Activated CD8-positive, alpha-beta T cell treated with anti-CD3 and anti-CD28 coated beads for 36 hours (primary cell): ENCODE measurements at regions of chr19 and their contacts with region 1.

Region 1: DNA sequence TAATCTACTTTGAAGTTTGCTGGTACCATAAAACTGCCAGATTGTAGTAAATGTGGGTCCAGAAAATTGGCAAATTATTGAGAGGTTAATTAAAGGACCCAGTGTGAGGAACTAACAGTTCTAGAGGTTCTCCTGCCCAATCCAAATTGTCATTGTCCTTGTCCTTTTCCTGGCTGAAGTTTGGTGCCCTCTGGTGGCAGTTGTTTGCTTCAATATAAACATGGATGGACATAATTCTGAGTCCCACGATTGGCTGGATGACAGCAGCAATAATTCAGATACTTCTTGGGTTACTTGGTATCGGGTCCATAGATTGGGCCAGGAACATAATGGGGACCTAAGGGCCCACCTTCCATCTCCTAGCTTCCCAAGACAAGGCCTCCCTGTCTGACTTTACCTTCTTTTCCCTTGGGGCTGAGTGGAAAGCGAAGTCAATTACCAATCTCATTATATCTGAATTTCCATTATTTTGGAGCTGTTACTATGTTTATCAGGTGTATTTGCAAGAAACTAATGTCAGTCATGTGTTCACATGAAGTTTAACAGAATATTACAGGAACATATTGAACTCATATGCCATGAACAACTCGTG is 33.8 kb upstream of the GARRE1 start:
- DNase-seq: peak; percentile 82
- ATAC-seq: no peak
- H3K4me3 Mint-ChIP-seq: no peak overlapping the region
- H3K27ac Mint-ChIP-seq: peak overlapping the region; percentile 45
- H3K4me1 Mint-ChIP-seq: peaks cover 49% of the 10 kb centered on the region
- H3K27me3 Mint-ChIP-seq: no peaks in the 10 kb centered on the region
- CTCF ChIP-seq: peak; percentile 76

Region 2: DNA sequence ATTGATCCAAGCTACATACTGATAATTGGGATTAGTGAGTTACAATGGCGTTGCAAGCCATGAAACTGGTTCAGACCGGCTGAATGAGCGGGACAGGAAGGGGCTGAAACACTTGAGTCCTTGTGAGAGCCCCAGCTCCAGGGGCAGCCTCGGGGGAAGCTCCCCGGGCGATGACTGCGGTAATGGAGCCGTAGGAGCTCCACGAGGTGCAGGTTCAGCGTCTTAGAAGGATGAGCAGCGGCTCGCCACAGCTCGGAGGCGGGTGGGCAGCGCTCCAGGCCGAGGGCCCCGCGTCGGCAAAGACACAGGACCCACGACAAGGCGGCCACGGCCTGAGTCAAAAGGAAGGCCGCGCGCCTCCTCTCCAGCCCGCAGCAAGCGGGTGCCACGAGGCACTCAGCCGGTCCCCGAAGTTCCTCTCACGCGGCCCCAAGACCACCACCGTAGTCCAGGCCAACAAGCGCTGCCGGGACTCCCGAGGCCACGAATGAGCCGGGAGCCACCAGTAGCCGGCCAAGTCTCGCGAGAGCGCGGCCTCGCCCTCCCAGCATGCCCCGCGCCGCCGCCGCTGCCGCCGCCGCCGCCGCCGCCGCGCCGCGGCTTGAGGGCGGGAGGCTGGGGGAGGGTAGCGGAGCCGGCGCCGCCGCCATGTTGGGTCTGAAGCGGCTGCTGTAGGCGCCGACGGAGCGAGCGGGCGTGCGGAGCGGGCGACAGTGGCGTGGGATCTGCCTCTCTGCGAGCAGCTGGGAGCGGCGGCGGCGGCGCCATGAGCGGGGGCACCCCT is 48.5 kb before region 1 on chr19 and contains the start of gene LSM14A:
- CTCF ChIA-PET with region 1: interaction called, 7 read pairs
- POLR2A ChIA-PET with region 1: interaction called, 6 read pairs
- intact Hi-C with region 1: loop called (anchors 5 kb)
- DNase-seq: peak; percentile 92
- ATAC-seq: peak; percentile 80
- H3K4me3 Mint-ChIP-seq: peak within 1 kb of the TSS; percentile 96
- H3K27ac Mint-ChIP-seq: peak within 1 kb of the TSS; percentile 100
- H3K4me1 Mint-ChIP-seq: peaks cover 34% of the 10 kb centered on the region
- H3K27me3 Mint-ChIP-seq: no peaks in the 10 kb centered on the region
- CTCF ChIP-seq: no peak
- total RNA-seq, gene LSM14A: 98.6 to 99.3 TPM

Region 3: DNA sequence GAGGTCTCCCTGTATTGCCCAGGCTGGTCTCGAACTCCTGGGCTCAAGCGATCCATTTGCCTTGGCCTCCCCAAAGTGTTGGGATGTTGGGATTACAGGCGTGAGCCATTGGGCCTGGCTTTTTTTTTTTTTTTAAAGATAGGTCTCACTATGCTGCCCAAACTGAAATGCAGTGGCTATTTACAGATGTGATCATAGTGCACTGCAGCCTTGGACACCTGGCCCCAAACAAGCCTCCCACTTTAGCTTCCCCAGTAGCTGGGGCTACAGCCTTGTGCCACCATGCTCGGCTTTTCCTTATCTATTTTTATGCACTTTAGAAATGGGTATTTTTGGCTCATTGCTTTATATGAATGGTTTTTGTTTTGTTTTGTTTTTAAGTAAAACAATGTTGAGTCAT is 10.8 kb before region 1 on chr19:
- CTCF ChIA-PET with region 1: interaction called, 10 read pairs
- POLR2A ChIA-PET with region 1: no interaction called
- intact Hi-C with region 1: no loop called
- DNase-seq: no peak
- ATAC-seq: no peak
- H3K4me3 Mint-ChIP-seq: no peak overlapping the region
- H3K27ac Mint-ChIP-seq: no peak overlapping the region
- H3K4me1 Mint-ChIP-seq: no peaks in the 10 kb centered on the region
- H3K27me3 Mint-ChIP-seq: no peaks in the 10 kb centered on the region
- CTCF ChIP-seq: no peak

Region 4: GRCh38 chr19:34232566-34233481 is 12.3 kb after region 1 on chr19:
- CTCF ChIA-PET with region 1: interaction called, 15 read pairs
- POLR2A ChIA-PET with region 1: interaction called, 8 read pairs
- intact Hi-C with region 1: no loop called
- DNase-seq: peak; percentile 44
- ATAC-seq: peak; percentile 89
- H3K4me3 Mint-ChIP-seq: peak overlapping the region; percentile 14
- H3K27ac Mint-ChIP-seq: peak overlapping the region; percentile 79
- H3K4me1 Mint-ChIP-seq: peaks cover 20% of the 10 kb centered on the region
- H3K27me3 Mint-ChIP-seq: no peaks in the 10 kb centered on the region
- CTCF ChIP-seq: no peak